ENCODE measurements at regions of chr1 and their contacts with region 1.

Region 1: GRCh38 chr1:234401658-234402057 is 28.4 kb downstream of the COA6 start:
- DNase-seq: no peak

Region 2: GRCh38 chr1:234433563-234434285 is 32.1 kb after region 1 on chr1:
- intact Hi-C with region 1: no loop called
- DNase-seq: no peak

Region 3: DNA sequence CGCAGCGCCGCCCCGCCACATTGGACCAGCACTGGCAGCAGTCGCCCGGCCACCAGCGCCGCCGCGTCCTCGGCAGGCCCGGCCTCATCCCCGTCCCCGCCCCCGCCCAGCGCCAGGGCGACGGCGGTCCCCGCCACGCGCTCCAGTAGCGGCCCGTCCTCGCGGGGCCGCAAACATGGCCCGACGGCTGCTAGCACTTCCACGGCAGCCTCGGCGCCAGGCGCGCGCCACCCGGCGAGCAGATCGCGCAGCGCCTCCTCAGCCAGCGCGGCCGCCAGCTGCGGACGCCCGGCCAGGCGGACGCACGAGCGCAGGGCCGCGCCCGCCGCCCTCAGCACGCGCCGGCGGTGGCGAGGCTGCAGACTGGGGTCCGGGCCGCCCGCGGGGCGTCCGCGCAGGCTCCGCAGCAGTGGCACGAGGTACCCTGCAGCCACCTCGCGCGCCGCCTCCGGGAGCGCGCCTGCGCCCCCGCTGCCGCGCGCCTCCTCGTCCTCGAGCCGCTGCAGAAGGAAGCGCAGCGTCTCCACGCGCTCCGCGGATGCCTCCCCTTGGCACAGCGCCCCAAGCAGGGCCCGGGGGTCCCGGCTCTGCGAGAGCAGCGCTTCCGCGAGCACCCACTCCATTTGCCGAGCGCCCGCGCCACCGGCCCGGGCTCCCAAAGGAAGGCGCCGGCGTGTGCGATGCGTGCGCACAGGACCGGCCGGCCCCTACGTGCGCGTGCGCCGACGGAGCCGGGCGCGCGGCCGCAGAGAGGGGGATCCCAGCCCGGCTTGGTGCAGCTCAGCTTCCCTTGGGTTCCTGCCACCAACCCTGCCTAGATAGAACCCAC is 77.0 kb after region 1 on chr1 and contains the start of gene TARBP1:
- intact Hi-C with region 1: loop called in 1 of 2 experiments (anchors 2 kb)
- DNase-seq: peak; percentile 90
- total RNA-seq, gene TARBP1: 13.8 to 20.0 TPM

Measured in posterior vena cava (tissue), 2 donors.